Tibial artery (tissue), 4 donors: ENCODE measurements at regions of chr6 and their contacts with region 1.

Region 1: GRCh38 chr6:2353412-2354137 is 108.2 kb upstream of the GMDS start:
- DNase-seq: peak; percentile 75 to 79
- H3K4me3 ChIP-seq: peak overlapping the region in 1 of 2 donors; percentile 15
- H3K27ac ChIP-seq: peak overlapping the region; percentile 66 to 69
- H3K4me1 ChIP-seq: peaks cover 0 to 56% (median 22%) of the 10 kb centered on the region in 4 donors
- H3K27me3 ChIP-seq: no peaks in the 10 kb centered on the region
- CTCF ChIP-seq: peak; percentile 73 to 80

Region 2: GRCh38 chr6:1604158-1605030 is 749.2 kb before region 1 on chr6:
- intact Hi-C with region 1: loop called (anchors 2 kb)
- DNase-seq: peak; percentile 57 to 89
- H3K4me3 ChIP-seq: peak overlapping the region; percentile 70 to 91
- H3K27ac ChIP-seq: peak overlapping the region; percentile 89 to 98
- H3K4me1 ChIP-seq: peaks cover 4 to 21% (median 15%) of the 10 kb centered on the region in 4 donors
- H3K27me3 ChIP-seq: no peaks in the 10 kb centered on the region
- CTCF ChIP-seq: peak; percentile 97 to 99

Region 3: DNA sequence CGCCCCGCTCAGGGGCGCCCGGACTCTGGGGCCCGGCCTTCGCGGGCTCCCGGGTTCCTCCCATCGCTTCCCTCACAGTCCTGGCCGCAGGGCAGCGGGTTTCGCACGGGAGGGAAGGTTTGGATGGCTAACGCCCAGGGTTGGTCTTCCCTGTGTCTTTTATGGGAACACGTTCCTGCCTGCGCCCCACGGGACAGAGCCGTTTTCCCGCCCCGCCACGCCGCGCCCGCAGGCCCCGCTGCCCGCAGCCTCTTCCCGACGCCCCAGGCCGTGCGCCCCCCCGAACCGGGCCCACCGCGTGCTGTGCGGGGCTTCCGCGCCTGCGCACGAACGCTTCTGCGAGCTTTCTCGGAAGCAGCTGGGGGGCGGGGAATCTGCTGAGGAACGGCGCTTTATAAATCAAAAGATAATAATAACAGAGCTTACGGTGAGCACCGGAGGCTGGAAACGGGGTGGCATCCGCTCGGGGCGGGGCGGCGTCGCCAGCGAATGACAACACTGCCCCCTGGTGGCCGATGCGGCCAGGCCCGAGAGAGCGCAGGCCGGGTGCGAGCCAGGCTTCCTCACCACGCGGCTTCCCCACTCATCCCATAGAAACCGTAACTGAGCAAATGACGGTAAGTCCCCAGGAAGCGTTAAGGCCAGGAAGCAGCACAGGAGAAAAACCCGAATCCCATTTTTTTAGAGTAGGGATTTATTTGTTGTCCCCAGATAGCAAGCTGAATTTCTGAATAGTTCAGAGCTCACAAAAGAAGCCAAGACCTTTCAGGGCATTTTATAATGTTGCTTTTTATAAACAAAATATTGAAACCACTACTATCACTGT is 280.8 kb after region 1 on chr6:
- intact Hi-C with region 1: loop called (anchors 5 kb)
- DNase-seq: peak; percentile 81 to 94
- H3K4me3 ChIP-seq: peak overlapping the region; percentile 53 to 70
- H3K27ac ChIP-seq: peak overlapping the region; percentile 93 to 94
- H3K4me1 ChIP-seq: peaks cover 0 to 52% (median 42%) of the 10 kb centered on the region in 4 donors
- H3K27me3 ChIP-seq: no peaks in the 10 kb centered on the region
- CTCF ChIP-seq: peak; percentile 98